GM12878 (cell line): ENCODE measurements at regions of chr7 and their contacts with region 1.

Region 1: DNA sequence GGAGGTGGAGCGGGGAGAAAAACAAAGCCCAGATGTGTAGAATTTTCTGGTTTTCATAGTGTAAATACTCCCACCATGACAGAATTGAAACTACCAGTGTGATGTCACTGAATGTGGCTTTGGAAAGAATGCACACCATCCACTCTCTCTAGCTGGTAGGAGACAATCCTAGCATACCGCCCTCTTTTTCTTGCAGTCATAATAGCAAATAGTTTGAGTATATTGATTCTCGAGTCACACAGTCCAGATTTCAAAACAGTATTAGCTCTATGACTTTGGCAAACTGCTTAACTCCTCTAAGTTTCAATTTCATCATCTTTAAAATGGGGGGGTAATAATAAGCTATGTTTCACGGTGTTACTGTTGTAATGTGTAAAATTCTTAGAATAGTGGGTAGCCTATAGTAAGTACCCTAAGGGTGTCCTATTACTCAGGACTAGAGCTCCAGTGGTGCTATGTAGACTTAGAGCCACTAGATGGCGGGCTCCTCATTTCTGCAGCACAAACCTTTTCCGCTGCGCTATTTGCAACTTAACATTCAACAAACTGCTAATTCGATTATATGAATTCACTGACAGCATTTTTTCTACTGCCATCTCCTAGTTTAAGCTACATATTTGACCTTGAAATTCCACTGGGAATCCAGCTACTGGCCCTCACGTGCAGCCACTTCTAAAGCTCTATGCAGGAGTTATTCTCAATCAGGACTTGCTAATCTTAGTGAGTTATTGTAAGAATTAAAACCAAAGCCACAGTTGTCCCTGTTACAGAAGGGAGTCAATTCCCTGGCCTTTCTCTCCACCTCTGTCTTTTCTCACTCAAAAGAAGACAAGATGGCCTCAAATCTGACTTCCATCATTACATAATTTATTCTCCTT is 18.7 kb downstream of the TAS2R40 start:
- DNase-seq: no peak
- ATAC-seq: peak; percentile 97
- H3K4me3 ChIP-seq: no peak overlapping the region
- H3K27ac ChIP-seq: no peak overlapping the region
- H3K4me1 ChIP-seq: no peaks in the 10 kb centered on the region
- H3K27me3 ChIP-seq: no peaks in the 10 kb centered on the region
- CTCF ChIP-seq: peak; percentile 82 to 95 (median 91)
- EP300 ChIP-seq: no peak
- POLR2A ChIP-seq: no peak
- RAD21 ChIP-seq: peak; percentile 92

Region 2: DNA sequence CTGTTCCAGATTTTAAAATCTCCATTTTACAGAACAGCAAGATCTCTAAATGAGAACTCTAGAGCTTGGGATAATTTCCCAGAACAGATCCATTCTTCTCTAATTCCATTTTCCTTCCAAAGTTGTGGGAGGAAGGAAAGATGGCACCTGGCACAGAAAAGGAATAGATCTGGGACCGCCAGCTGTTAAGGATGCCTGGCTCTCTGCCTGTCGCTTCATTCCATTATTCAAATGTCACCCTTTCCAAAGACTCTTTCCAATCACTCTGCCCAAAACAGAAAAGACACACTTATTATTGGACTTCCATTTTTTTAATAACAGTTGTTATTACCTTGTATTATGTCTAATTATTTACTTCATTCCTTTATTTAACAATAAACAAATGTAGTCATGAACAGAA is 212.8 kb before region 1 on chr7:
- CTCF ChIA-PET with region 1: no interaction called
- POLR2A ChIA-PET with region 1: no interaction called
- RAD21 ChIA-PET with region 1: no interaction called
- SMC1A ChIA-PET with region 1: no interaction called
- in situ Hi-C with region 1: no loop called
- intact Hi-C with region 1: no loop called
- DNase-seq: no peak
- ATAC-seq: no peak
- H3K4me3 ChIP-seq: no peak overlapping the region
- H3K27ac ChIP-seq: no peak overlapping the region
- H3K4me1 ChIP-seq: no peaks in the 10 kb centered on the region
- H3K27me3 ChIP-seq: no peaks in the 10 kb centered on the region; a peak in 1 of 4 replicates
- CTCF ChIP-seq: no peak
- EP300 ChIP-seq: no peak
- POLR2A ChIP-seq: no peak
- RAD21 ChIP-seq: no peak

Region 3: DNA sequence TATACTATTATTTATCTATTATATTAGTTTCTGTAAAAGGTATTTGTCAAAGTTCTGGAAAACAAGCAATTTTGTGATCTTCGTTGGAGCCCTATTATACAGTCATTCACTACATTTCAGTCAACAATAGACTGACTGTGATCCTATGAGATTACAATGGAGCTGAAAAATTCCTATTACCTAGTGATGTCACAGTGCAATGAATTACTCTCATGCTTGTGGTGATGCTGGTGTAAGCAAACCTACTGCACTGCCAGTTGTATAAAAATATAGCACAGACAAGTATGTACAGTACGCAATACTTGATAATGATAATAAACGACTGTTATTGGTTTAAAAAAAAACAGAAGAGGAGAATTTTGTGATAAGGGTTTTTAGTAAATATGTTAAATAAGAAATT is 167.0 kb before region 1 on chr7:
- CTCF ChIA-PET with region 1: no interaction called
- POLR2A ChIA-PET with region 1: no interaction called
- RAD21 ChIA-PET with region 1: no interaction called
- SMC1A ChIA-PET with region 1: no interaction called
- in situ Hi-C with region 1: no loop called
- intact Hi-C with region 1: no loop called
- DNase-seq: no peak
- ATAC-seq: no peak
- H3K4me3 ChIP-seq: no peak overlapping the region
- H3K27ac ChIP-seq: no peak overlapping the region
- H3K4me1 ChIP-seq: no peaks in the 10 kb centered on the region
- H3K27me3 ChIP-seq: no peaks in the 10 kb centered on the region; a peak in 1 of 4 replicates
- CTCF ChIP-seq: no peak
- EP300 ChIP-seq: no peak
- POLR2A ChIP-seq: no peak
- RAD21 ChIP-seq: no peak

Region 4: GRCh38 chr7:143214789-143215679 is 25.5 kb before region 1 on chr7:
- CTCF ChIA-PET with region 1: interaction called, 18 read pairs
- POLR2A ChIA-PET with region 1: no interaction called
- RAD21 ChIA-PET with region 1: interaction called, 3 read pairs
- SMC1A ChIA-PET with region 1: interaction called, 7 read pairs
- in situ Hi-C with region 1: no loop called
- intact Hi-C with region 1: no loop called
- DNase-seq: peak; percentile 50
- ATAC-seq: peak; percentile 91
- H3K4me3 ChIP-seq: no peak overlapping the region
- H3K27ac ChIP-seq: no peak overlapping the region
- H3K4me1 ChIP-seq: no peaks in the 10 kb centered on the region
- H3K27me3 ChIP-seq: no peaks in the 10 kb centered on the region; a peak in 2 of 4 replicates
- CTCF ChIP-seq: peak; percentile 97 to 100 (median 100); a peak in 5 of 6 replicates
- EP300 ChIP-seq: no peak
- POLR2A ChIP-seq: no peak
- RAD21 ChIP-seq: peak; percentile 100

Region 5: GRCh38 chr7:143256932-143257331 is 16.4 kb after region 1 on chr7:
- CTCF ChIA-PET with region 1: interaction called, 66 read pairs
- POLR2A ChIA-PET with region 1: no interaction called
- RAD21 ChIA-PET with region 1: interaction called, 4 read pairs
- SMC1A ChIA-PET with region 1: interaction called, 7 read pairs
- in situ Hi-C with region 1: no loop called
- intact Hi-C with region 1: no loop called
- DNase-seq: peak; percentile 16
- ATAC-seq: peak; percentile 93
- H3K4me3 ChIP-seq: no peak overlapping the region
- H3K27ac ChIP-seq: no peak overlapping the region
- H3K4me1 ChIP-seq: peaks cover 10% of the 10 kb centered on the region; the same call in 1 of the 2 replicates
- H3K27me3 ChIP-seq: no peaks in the 10 kb centered on the region
- CTCF ChIP-seq: no peak
- EP300 ChIP-seq: no peak
- POLR2A ChIP-seq: no peak
- RAD21 ChIP-seq: no peak

Region 6: DNA sequence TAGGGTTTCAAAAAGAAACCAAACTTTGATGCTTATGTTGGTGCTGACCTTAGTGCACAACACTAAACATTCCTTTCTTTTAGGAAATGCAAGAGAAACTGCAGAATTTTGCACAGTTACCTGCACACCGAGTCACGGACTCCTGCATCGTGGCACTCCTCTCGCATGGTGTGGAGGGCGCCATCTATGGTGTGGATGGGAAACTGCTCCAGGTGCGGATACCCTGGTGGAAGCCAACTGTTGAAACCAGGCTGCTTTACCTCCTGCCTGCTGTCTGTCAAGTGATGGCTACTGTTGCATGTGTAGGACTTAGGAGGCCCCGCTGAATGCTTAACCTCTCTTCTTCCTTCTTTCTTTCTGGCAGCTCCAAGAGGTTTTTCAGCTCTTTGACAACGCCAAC is 59.3 kb after region 1 on chr7:
- CTCF ChIA-PET with region 1: interaction called, 34 read pairs
- POLR2A ChIA-PET with region 1: no interaction called
- RAD21 ChIA-PET with region 1: interaction called, 14 read pairs
- SMC1A ChIA-PET with region 1: interaction called, 20 read pairs
- in situ Hi-C with region 1: no loop called
- intact Hi-C with region 1: loop called (anchors 1 kb)
- DNase-seq: no peak
- ATAC-seq: peak; percentile 75
- H3K4me3 ChIP-seq: no peak overlapping the region
- H3K27ac ChIP-seq: no peak overlapping the region
- H3K4me1 ChIP-seq: 0 out of 2 replicates have a peak, but pooled peaks cover 3% of the 10 kb centered on the region
- H3K27me3 ChIP-seq: no peaks in the 10 kb centered on the region
- CTCF ChIP-seq: peak; percentile 44 to 69 (median 61)
- EP300 ChIP-seq: no peak
- POLR2A ChIP-seq: 0 out of 2 replicates have a peak, but pooled peaks have one; percentile 33
- RAD21 ChIP-seq: peak; percentile 36; the same call in 1 of the 2 replicates

Region 7: DNA sequence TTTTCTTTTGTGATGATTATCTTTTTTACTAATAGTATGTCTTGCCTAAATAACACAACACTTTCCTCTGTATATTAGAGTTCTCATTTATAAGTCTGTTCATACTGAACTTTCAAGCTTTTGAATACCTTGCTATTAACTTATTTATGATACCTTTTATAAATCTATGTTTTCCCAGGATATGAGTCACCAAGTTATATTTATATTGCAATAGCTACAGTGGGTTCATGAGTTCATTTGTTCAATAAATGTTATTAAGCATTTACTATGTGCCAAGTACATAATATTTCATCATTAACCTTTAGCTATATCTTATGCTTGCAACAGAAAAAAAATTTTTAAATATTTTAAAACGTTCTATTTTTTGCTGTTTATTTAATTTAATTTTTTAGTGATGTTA is 93.7 kb after region 1 on chr7:
- CTCF ChIA-PET with region 1: interaction called, 8 read pairs
- POLR2A ChIA-PET with region 1: no interaction called
- RAD21 ChIA-PET with region 1: interaction called, 5 read pairs
- SMC1A ChIA-PET with region 1: interaction called, 11 read pairs
- in situ Hi-C with region 1: no loop called
- intact Hi-C with region 1: no loop called
- DNase-seq: no peak
- ATAC-seq: no peak
- H3K4me3 ChIP-seq: no peak overlapping the region
- H3K27ac ChIP-seq: no peak overlapping the region
- H3K4me1 ChIP-seq: no peaks in the 10 kb centered on the region
- H3K27me3 ChIP-seq: no peaks in the 10 kb centered on the region; a peak in 1 of 4 replicates
- CTCF ChIP-seq: no peak
- EP300 ChIP-seq: no peak
- POLR2A ChIP-seq: no peak
- RAD21 ChIP-seq: no peak

Region 8: DNA sequence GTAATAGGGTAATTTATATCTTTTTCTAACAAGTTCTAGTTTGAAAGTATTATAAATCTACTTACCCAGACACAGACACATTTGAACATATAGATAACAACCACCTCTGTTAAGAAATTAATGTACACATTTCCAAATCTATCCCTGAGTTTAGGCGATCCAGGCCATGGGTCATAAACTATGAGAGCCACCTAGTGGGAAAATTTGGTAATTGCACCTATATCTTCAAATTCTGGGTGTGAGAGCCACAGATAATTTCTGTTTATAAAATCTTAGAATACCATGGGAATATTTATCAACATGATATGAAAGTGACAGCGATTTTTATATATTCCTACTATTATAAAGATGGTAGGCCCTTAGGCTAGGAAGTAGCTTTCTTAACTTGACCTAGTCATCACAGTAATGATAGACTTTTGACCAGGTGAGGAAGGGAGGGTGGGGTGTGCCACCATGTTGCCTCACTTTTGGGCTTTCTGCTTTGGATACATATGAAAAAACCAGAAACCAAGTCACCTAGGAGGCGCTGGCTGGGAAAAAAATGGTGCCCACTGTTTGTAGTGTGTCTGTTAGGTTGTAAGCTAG is 176.1 kb after region 1 on chr7:
- CTCF ChIA-PET with region 1: interaction called, 124 read pairs
- POLR2A ChIA-PET with region 1: no interaction called
- RAD21 ChIA-PET with region 1: interaction called, 54 read pairs
- SMC1A ChIA-PET with region 1: interaction called, 73 read pairs
- in situ Hi-C with region 1: no loop called
- intact Hi-C with region 1: loop called (anchors 1 kb)
- DNase-seq: no peak
- ATAC-seq: peak; percentile 82
- H3K4me3 ChIP-seq: no peak overlapping the region
- H3K27ac ChIP-seq: no peak overlapping the region
- H3K4me1 ChIP-seq: no peaks in the 10 kb centered on the region
- H3K27me3 ChIP-seq: no peaks in the 10 kb centered on the region
- CTCF ChIP-seq: peak; percentile 61 to 77 (median 62)
- EP300 ChIP-seq: no peak
- POLR2A ChIP-seq: no peak
- RAD21 ChIP-seq: peak; percentile 81

Region 9: DNA sequence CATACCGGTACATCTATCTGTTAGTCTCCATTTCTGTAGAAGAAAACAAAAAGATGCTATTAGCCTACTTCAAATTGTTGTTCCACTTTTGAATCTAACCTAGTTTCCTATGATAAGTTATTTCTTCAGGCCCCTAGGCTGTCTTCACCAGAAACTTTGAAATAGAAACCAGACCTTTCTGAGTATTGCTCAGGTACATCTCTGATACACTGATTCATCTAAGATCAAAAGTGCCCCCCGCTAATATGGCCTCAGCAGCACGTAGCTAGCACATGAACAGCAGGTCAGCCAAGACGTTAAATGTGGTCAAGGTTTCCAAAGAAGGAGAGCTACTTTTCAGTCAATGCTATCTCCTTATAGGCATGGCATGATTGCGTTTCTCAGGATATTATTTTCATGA is 493.3 kb after region 1 on chr7:
- CTCF ChIA-PET with region 1: interaction called, 11 read pairs
- POLR2A ChIA-PET with region 1: no interaction called
- RAD21 ChIA-PET with region 1: no interaction called
- SMC1A ChIA-PET with region 1: interaction called, 7 read pairs
- in situ Hi-C with region 1: no loop called
- intact Hi-C with region 1: no loop called
- DNase-seq: no peak
- ATAC-seq: no peak
- H3K4me3 ChIP-seq: no peak overlapping the region
- H3K27ac ChIP-seq: no peak overlapping the region
- H3K4me1 ChIP-seq: no peaks in the 10 kb centered on the region
- H3K27me3 ChIP-seq: no peaks in the 10 kb centered on the region
- CTCF ChIP-seq: no peak
- EP300 ChIP-seq: no peak
- POLR2A ChIP-seq: no peak
- RAD21 ChIP-seq: no peak